CD4-positive, alpha-beta T cell (primary cell): ENCODE measurements at regions of chr13 and their contacts with region 1.

Region 1: GRCh38 chr13:102555917-102556553 is 40.8 kb upstream of the TPP2 start:
- DNase-seq: peak in 4 of 14 experiments; percentile 5 to 51 (median 38)
- ATAC-seq: no peak
- H3K4me3 ChIP-seq: no peak overlapping the region
- H3K4me3 Mint-ChIP-seq: no peak overlapping the region
- H3K27ac ChIP-seq: no peak overlapping the region
- H3K27ac Mint-ChIP-seq: no peak overlapping the region
- H3K4me1 ChIP-seq: no peaks in the 10 kb centered on the region
- H3K4me1 Mint-ChIP-seq: peaks cover 5% of the 10 kb centered on the region
- H3K27me3 ChIP-seq: no peaks in the 10 kb centered on the region
- H3K27me3 Mint-ChIP-seq: peaks cover 6% of the 10 kb centered on the region
- CTCF ChIP-seq: peak; percentile 53

Region 2: DNA sequence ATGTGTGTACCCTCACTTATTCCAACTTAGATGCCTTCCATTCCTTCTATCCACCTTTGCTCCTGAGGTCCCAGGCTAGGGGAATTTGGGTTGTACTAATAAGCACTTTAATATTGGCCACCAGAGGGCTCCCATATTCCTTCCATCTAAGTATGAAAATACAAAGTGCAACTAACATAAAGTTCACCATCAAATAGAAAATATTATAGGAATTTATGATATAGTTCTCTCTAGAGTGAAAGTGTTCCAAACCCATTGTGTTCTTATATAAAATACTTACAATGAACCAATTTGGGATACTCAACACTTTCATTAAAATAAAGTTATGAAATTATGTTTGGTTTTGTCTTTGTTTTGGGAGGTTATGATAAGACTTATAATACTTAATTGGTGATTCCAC is 1041.2 kb before region 1 on chr13:
- CTCF ChIA-PET with region 1: no interaction called
- POLR2A ChIA-PET with region 1: no interaction called
- intact Hi-C with region 1: loop called in 1 of 2 experiments (anchors 2 kb)
- DNase-seq: peak in 4 of 14 experiments; percentile 17 to 62 (median 59)
- ATAC-seq: no peak
- H3K4me3 ChIP-seq: no peak overlapping the region
- H3K4me3 Mint-ChIP-seq: no peak overlapping the region
- H3K27ac ChIP-seq: no peak overlapping the region
- H3K27ac Mint-ChIP-seq: no peak overlapping the region
- H3K4me1 ChIP-seq: no peaks in the 10 kb centered on the region
- H3K4me1 Mint-ChIP-seq: no peaks in the 10 kb centered on the region
- H3K27me3 ChIP-seq: no peaks in the 10 kb centered on the region
- H3K27me3 Mint-ChIP-seq: peaks cover 16% of the 10 kb centered on the region
- CTCF ChIP-seq: peak; percentile 56

Region 3: GRCh38 chr13:102141625-102142472 is 414.2 kb before region 1 on chr13:
- CTCF ChIA-PET with region 1: no interaction called
- POLR2A ChIA-PET with region 1: no interaction called
- intact Hi-C with region 1: loop called in 1 of 2 experiments (anchors 5 kb)
- DNase-seq: no peak
- ATAC-seq: no peak
- H3K4me3 ChIP-seq: no peak overlapping the region
- H3K4me3 Mint-ChIP-seq: no peak overlapping the region
- H3K27ac ChIP-seq: no peak overlapping the region
- H3K27ac Mint-ChIP-seq: no peak overlapping the region
- H3K4me1 ChIP-seq: no peaks in the 10 kb centered on the region
- H3K4me1 Mint-ChIP-seq: no peaks in the 10 kb centered on the region
- H3K27me3 ChIP-seq: peaks cover 0 to 3% of the 10 kb centered on the region in 2 experiments
- H3K27me3 Mint-ChIP-seq: no peaks in the 10 kb centered on the region
- CTCF ChIP-seq: peak; percentile 51